Endothelial cell of umbilical vein (primary cell): ENCODE measurements at regions of chr18 and their contacts with region 1.

Region 1: DNA sequence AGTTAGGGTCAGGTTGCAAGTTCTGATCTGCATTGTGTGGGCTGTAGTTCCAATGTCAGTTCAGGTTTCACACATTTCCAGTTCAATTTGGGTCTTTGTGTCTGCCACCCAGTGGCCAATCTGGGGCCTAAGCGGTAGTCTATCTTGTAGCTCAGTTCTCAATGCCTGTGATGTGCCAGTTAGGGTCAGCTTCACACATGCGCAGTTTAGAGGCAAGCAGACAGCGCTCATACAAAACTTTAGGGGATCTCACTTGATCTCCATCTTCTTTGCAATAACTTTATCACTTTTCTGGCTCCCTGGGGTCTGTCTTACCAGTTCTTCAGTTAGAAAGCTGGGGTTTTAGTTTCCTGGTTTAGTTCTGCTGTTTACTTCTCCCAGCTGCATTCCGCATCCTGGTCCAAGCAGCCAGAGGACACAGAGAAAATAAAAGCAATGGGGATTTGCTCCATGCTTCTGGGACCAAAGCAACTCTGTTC is 11.0 kb upstream of the ZNF24 start:
- DNase-seq: peak; percentile 86
- H3K4me3 ChIP-seq: no peak overlapping the region
- H3K27ac ChIP-seq: no peak overlapping the region
- H3K4me1 ChIP-seq: no peaks in the 10 kb centered on the region
- H3K27me3 ChIP-seq: no peaks in the 10 kb centered on the region
- CTCF ChIP-seq: peak; percentile 81 to 82
- POLR2A ChIP-seq: no peak

Region 2: GRCh38 chr18:34867520-34867919 is 487.7 kb before region 1 on chr18:
- CTCF ChIA-PET with region 1: interaction called, 5 read pairs
- POLR2A ChIA-PET with region 1: no interaction called
- dilution Hi-C with region 1: no loop called
- intact Hi-C with region 1: loop called (anchors 10 kb)
- DNase-seq: peak; percentile 10
- H3K4me3 ChIP-seq: no peak overlapping the region
- H3K27ac ChIP-seq: no peak overlapping the region
- H3K4me1 ChIP-seq: no peaks in the 10 kb centered on the region
- H3K27me3 ChIP-seq: no peaks in the 10 kb centered on the region
- CTCF ChIP-seq: peak; percentile 15 to 34
- POLR2A ChIP-seq: no peak

Region 3: DNA sequence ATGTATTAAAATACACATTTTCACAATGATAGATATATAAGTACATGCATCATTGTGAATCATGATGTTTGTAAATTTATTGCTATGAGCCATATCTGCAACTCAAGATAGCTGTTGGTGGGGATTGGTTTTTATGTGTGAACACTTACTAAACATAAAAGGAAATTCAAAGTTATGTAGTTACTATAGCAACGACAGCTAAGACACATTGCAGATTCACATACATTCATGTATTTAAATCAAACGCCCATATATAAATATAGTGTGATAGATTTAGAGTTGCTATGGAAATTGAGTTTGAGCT is 248.4 kb before region 1 on chr18:
- CTCF ChIA-PET with region 1: no interaction called
- POLR2A ChIA-PET with region 1: no interaction called
- dilution Hi-C with region 1: no loop called
- intact Hi-C with region 1: no loop called
- DNase-seq: no peak
- H3K4me3 ChIP-seq: no peak overlapping the region
- H3K27ac ChIP-seq: no peak overlapping the region
- H3K4me1 ChIP-seq: peaks cover 11% of the 10 kb centered on the region
- H3K27me3 ChIP-seq: no peaks in the 10 kb centered on the region
- CTCF ChIP-seq: no peak
- POLR2A ChIP-seq: no peak

Region 4: GRCh38 chr18:35231052-35231451 is 124.1 kb before region 1 on chr18:
- CTCF ChIA-PET with region 1: interaction called, 121 read pairs
- POLR2A ChIA-PET with region 1: no interaction called
- dilution Hi-C with region 1: no loop called
- intact Hi-C with region 1: loop called (anchors 1 kb)
- DNase-seq: peak; percentile 79
- H3K4me3 ChIP-seq: no peak overlapping the region
- H3K27ac ChIP-seq: no peak overlapping the region
- H3K4me1 ChIP-seq: no peaks in the 10 kb centered on the region
- H3K27me3 ChIP-seq: no peaks in the 10 kb centered on the region
- CTCF ChIP-seq: peak; percentile 78 to 82
- POLR2A ChIP-seq: no peak

Region 5: GRCh38 chr18:35322486-35323458 is 32.4 kb before region 1 on chr18:
- CTCF ChIA-PET with region 1: interaction called, 13 read pairs
- POLR2A ChIA-PET with region 1: no interaction called
- dilution Hi-C with region 1: no loop called
- intact Hi-C with region 1: no loop called
- DNase-seq: peak; percentile 29
- H3K4me3 ChIP-seq: no peak overlapping the region
- H3K27ac ChIP-seq: no peak overlapping the region
- H3K4me1 ChIP-seq: peaks cover 7% of the 10 kb centered on the region
- H3K27me3 ChIP-seq: no peaks in the 10 kb centered on the region
- CTCF ChIP-seq: no peak
- POLR2A ChIP-seq: no peak

Region 6: DNA sequence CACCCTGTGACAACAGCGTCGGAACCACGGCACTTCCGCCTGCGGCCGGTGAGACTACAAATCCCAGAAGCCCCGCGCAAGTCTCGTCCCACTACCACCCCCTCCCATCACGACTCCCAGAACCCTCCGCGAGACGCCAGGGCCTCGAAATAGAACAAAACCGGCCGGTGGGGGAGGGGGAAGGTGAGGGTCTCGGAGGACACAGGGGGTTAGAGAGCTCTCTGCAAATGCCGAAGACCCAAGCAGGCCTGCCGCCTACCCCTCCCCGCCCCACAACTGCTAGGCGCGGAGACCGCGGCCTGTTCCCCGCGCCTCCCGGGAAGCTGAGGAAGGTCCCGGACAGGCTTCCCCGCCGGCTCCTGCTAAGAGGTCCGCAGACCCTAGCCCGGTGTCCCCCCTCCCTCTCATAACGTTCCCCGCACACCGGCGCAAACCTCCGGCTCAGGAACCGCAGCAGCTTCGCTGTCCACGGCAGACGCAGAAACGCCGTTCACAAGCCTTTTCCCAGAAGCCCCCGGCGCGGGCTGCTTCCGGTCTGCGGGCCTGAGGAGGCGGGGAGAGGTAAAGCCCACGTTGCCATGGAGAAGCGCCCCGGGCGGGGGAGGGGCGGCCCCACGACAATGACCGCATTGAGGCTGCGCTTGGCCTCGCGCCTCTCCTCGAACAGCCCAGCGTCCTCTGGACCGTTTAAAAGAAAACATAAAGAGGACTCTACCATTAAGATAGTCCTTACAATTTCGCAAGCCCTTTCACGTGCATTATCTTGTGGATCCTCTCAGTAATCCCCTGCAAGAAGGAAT is 11.0 kb before region 1 on chr18 and contains the start of gene ZNF24:
- CTCF ChIA-PET with region 1: interaction called, 26 read pairs
- POLR2A ChIA-PET with region 1: no interaction called
- dilution Hi-C with region 1: no loop called
- intact Hi-C with region 1: no loop called
- DNase-seq: peak; percentile 92
- H3K4me3 ChIP-seq: peak within 1 kb of the TSS; percentile 69 to 97 (median 92)
- H3K27ac ChIP-seq: peak within 1 kb of the TSS; percentile 95
- H3K4me1 ChIP-seq: peaks cover 18% of the 10 kb centered on the region
- H3K27me3 ChIP-seq: no peaks in the 10 kb centered on the region
- CTCF ChIP-seq: no peak
- POLR2A ChIP-seq: peak; percentile 82
- total RNA-seq, gene ZNF24: 38.6 and 40.2 TPM in 2 replicates

Region 7: GRCh38 chr18:35374708-35375107 is 19.5 kb after region 1 on chr18:
- CTCF ChIA-PET with region 1: interaction called, 10 read pairs
- POLR2A ChIA-PET with region 1: no interaction called
- dilution Hi-C with region 1: no loop called
- intact Hi-C with region 1: no loop called
- DNase-seq: no peak
- H3K4me3 ChIP-seq: no peak overlapping the region
- H3K27ac ChIP-seq: no peak overlapping the region
- H3K4me1 ChIP-seq: peaks cover 7% of the 10 kb centered on the region
- H3K27me3 ChIP-seq: peaks cover 5% of the 10 kb centered on the region in 2 experiments
- CTCF ChIP-seq: no peak
- POLR2A ChIP-seq: no peak

Region 8: GRCh38 chr18:35756506-35757117 is 401.4 kb after region 1 on chr18:
- CTCF ChIA-PET with region 1: no interaction called
- POLR2A ChIA-PET with region 1: no interaction called
- dilution Hi-C with region 1: no loop called
- intact Hi-C with region 1: no loop called
- DNase-seq: peak; percentile 63
- H3K4me3 ChIP-seq: no peak overlapping the region
- H3K27ac ChIP-seq: no peak overlapping the region
- H3K4me1 ChIP-seq: no peaks in the 10 kb centered on the region
- H3K27me3 ChIP-seq: peaks cover 3 to 6% of the 10 kb centered on the region in 2 experiments
- CTCF ChIP-seq: peak; percentile 58 to 75
- POLR2A ChIP-seq: no peak